PC-3 (cell line): ENCODE measurements at regions of chr17 and their contacts with region 1.

Region 1: DNA sequence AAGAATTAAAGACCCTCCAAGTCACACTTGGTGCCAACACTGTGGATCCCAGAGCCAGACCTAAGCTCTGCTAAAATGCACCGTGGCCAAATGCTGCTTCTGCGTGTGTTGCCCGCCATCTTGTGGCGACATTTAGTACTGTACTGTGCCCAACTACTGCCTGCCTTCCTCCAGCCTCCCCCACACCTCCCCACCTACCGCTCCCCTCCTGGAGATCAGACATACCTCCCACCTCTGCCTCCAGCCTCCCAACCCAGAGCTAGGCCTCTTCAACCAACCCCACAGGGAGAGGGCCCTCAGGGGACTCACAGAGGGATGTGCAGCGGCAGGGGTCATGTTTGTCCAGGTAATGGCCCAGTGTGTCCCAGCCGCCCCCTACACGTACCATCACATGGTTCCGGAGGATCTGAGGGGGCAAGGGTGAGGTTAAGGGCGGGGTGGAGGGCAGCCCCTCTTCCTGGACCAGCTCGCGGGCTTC is 5.5 kb downstream of the GAS2L2 start:
- DNase-seq: peak; percentile 76
- ATAC-seq: peak; percentile 90
- H3K4me3 ChIP-seq: no peak overlapping the region
- H3K27ac ChIP-seq: no peak overlapping the region
- H3K4me1 ChIP-seq: no peaks in the 10 kb centered on the region
- H3K27me3 ChIP-seq: no peaks in the 10 kb centered on the region
- CTCF ChIP-seq: peak; percentile 77

Region 2: GRCh38 chr17:35555695-35556094 is 191.9 kb before region 1 on chr17:
- CTCF ChIA-PET with region 1: no interaction called
- POLR2A ChIA-PET with region 1: no interaction called
- intact Hi-C with region 1: loop called (anchors 1 kb)
- DNase-seq: peak; percentile 27
- ATAC-seq: no peak
- H3K4me3 ChIP-seq: no peak overlapping the region
- H3K27ac ChIP-seq: no peak overlapping the region
- H3K4me1 ChIP-seq: no peaks in the 10 kb centered on the region
- H3K27me3 ChIP-seq: peaks cover 27% of the 10 kb centered on the region
- CTCF ChIP-seq: peak; percentile 36; the same call in 1 of the 2 replicates

Region 3: DNA sequence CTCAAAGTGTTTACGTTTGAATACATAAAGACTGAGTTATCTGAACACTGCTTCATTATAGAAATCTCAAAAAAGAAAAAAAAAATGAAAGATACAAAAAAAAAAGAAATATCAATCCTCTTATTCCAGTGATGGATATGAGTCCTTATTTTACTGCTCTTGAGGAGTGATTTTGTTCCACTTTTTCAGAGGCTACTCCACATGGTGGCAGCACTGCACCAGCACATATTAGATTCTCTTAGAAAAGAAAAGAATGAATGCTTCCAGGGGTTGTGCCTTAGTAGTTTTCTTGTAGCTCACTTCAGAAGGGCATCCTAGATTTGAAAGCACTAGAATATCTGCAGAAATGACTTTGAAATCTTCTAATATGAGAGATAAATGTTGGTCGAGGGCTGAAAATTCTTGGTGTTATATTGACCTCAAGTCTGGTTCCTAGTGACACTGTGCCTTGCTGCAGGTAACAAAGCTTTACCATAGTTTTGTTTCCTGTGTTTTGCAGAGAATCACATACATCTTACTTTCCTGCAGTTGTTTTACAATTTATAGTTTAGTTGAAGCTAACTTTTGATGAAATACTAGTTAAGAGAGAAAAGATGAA is 134.6 kb before region 1 on chr17:
- CTCF ChIA-PET with region 1: interaction called, 14 read pairs
- POLR2A ChIA-PET with region 1: no interaction called
- intact Hi-C with region 1: loop called (anchors 1 kb)
- DNase-seq: peak; percentile 48
- ATAC-seq: peak; percentile 46; the same call in 1 of the 2 replicates
- H3K4me3 ChIP-seq: no peak overlapping the region
- H3K27ac ChIP-seq: no peak overlapping the region
- H3K4me1 ChIP-seq: no peaks in the 10 kb centered on the region
- H3K27me3 ChIP-seq: no peaks in the 10 kb centered on the region
- CTCF ChIP-seq: peak; percentile 70

Region 4: DNA sequence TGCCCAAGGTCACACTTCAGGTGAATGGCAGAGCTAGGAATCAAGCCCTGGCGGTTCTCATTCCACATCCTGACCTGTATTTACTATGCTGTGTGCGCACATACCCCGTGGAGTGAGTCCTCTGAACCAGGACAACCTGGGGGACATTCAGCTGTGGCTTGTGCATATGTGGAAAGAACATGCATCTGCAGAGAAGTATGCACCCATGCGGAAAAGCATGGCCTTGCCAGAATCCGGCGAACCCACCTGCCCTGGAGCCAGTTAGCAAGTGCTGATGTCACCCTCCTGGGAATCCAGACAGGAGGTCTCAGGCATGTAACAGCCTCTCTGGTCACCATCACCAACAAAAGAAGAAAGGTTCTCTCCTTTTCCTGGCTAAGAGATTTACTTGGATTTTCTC is 14.2 kb before region 1 on chr17:
- CTCF ChIA-PET with region 1: no interaction called
- POLR2A ChIA-PET with region 1: no interaction called
- intact Hi-C with region 1: no loop called
- DNase-seq: no peak
- ATAC-seq: no peak
- H3K4me3 ChIP-seq: no peak overlapping the region
- H3K27ac ChIP-seq: no peak overlapping the region
- H3K4me1 ChIP-seq: no peaks in the 10 kb centered on the region
- H3K27me3 ChIP-seq: no peaks in the 10 kb centered on the region
- CTCF ChIP-seq: no peak

Region 5: GRCh38 chr17:35819456-35819855 is 71.9 kb after region 1 on chr17:
- CTCF ChIA-PET with region 1: no interaction called
- POLR2A ChIA-PET with region 1: no interaction called
- intact Hi-C with region 1: no loop called
- DNase-seq: no peak
- ATAC-seq: no peak
- H3K4me3 ChIP-seq: no peak overlapping the region
- H3K27ac ChIP-seq: no peak overlapping the region
- H3K4me1 ChIP-seq: no peaks in the 10 kb centered on the region
- H3K27me3 ChIP-seq: no peaks in the 10 kb centered on the region
- CTCF ChIP-seq: no peak